ENCODE measurements at regions of chr11 and their contacts with region 1.

Region 1: DNA sequence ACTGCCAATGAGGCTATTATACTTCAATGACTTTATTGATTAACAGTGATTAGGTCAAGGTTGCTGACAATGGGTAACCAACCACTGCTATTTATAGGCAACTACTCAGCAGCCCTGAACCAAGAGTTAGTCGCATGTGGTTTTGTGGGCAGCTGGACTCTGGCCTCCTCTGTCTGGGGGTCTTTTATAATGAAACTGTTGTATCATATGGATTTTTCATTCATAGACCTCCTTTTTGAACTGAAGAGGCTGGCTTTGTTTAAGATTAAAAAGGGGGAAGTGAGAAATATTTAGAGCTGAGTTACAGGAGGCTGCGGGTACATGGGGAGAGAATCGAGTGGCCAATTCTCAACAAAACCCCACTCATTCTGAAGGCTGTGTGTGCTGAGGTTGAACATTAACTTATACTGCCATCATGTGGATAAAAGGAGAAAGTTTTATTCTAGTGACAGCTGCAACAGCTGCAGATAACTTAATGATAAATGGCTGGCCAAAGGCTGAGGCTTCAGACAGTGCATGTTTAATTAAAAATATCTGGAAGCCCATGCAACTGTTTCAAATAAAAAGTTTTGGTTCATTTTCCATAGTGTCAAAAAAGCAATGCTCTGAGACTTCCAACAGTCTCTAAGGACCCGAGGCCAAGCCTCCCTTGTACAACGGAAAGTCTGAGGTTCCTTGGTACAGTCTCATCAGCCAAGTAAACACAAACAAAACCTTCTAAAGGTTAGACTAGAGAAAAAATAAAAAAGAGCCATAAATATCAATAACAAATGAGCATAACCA is 682.6 kb downstream of the KCNA4 start:
- DNase-seq: peak; percentile 48
- H3K4me3 ChIP-seq: no peak overlapping the region
- H3K27ac ChIP-seq: no peak overlapping the region
- H3K4me1 ChIP-seq: peaks cover 16% of the 10 kb centered on the region
- H3K27me3 ChIP-seq: no peaks in the 10 kb centered on the region
- CTCF ChIP-seq: peak; percentile 59 to 64

Region 2: DNA sequence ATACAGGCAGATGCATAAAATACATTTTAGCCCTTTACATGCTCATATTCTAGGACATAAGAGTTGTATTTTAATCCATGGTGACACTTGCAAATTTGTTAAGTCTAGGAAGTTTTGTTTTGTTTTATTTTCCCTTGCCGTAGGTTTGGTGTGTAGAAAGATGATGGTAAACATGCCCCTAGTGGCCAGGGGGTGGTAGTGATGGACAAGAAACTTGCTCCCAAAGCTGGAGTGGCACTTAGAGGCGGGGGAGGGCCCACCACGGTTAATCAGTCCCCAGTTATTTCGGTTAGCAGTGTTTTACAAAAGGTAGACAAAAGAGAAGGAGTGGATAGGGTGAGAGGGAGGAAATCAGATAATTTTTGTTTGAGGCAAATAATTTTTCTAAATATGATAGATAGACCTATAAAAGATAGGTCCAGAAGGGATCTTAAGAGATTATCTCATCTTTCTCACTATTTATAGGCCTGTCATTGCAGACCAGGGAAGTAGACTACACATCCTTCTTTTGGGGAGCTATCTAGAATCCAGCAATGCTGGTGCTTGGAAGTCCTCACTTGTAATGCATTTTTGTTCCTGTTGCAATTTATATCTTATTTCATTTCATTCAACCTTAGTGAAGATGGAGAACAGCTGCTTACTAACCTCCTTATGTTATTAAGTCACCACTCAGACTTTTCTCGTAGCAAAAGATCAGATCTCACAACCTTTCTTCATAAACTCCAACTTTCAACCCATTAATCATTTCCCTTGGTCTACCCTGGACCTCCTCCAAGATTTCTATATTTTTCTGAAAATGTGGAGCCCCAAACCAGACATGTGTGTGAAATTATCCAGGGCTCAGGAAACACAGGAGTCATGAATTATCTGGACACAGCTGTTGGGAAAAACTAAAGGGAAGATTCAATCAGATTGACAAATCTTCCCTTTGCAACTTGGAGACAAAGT is 1628.0 kb before region 1 on chr11:
- CTCF ChIA-PET with region 1: no interaction called
- dilution Hi-C with region 1: no loop called
- in situ Hi-C with region 1: loop called (anchors 10 kb)
- intact Hi-C with region 1: no loop called
- DNase-seq: no peak
- H3K4me3 ChIP-seq: no peak overlapping the region
- H3K27ac ChIP-seq: no peak overlapping the region
- H3K4me1 ChIP-seq: peaks cover under 1% of the 10 kb centered on the region
- H3K27me3 ChIP-seq: peaks cover 3% of the 10 kb centered on the region
- CTCF ChIP-seq: peak; percentile 75 to 76

Region 3: DNA sequence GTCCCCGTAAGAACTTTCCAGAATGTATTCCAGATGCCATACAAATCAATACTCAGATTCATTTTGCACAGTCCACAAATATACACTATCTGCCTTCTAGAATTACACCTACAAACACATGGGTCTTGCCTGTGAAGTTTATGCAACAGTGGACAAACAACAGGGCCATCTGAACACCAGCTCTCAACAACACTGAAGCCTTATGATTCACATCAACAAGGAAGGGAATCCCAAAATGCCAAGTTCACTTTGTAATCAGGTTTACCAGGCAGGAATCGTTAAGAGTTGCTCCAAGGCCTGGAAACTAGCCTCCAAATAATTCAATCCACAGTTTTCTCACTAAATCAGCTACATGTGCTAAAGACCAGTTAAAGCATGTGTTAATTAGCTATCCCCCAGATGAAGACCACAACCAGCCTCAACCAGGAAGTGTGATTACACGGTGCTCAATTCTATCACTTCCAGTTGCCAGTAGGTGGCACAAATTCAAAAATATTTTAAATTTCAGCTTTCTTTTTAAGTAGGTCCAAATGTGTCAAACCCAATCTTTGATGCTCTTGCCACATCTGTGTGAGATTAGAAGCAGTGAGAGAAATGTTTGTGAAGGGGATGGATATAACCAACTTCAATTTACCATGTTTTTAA is 1494.8 kb before region 1 on chr11:
- CTCF ChIA-PET with region 1: no interaction called
- dilution Hi-C with region 1: no loop called
- in situ Hi-C with region 1: no loop called
- intact Hi-C with region 1: loop called (anchors 5 kb)
- DNase-seq: no peak
- H3K4me3 ChIP-seq: no peak overlapping the region
- H3K27ac ChIP-seq: no peak overlapping the region
- H3K4me1 ChIP-seq: no peaks in the 10 kb centered on the region
- H3K27me3 ChIP-seq: no peaks in the 10 kb centered on the region
- CTCF ChIP-seq: peak; percentile 49 to 54

Region 4: DNA sequence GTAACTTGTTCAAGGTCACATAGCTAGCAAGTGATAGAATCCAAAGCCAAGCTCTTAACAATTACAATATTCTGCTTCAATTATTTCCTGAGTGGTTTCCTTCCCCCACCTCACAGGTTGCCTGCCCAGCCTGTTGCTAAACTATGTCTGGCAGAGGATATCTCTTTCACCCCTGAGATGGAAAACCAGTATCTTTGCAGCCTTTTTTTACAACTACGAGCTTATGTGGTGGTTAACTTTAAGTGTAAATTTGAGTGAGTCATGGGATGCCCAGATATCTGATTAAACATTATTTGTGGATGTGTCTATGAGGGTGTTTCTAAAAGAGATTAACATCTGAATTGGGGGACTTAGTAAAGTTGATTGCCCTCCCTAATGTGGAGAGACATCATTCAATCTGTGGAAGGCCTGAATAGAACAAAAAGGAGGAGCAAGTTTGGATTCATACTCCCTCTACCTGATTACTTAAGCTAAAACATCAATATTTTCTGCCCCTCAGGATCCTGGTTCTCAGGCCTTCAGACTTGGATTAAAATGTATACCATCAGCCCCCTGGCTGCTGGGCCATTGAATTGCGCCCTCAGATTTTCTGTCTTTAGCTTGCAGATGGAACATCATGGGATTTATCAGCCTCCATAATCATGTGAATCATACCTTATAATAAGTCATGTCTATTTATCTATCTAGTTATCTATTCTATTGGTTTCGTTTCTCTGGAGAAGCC is 314.1 kb before region 1 on chr11:
- CTCF ChIA-PET with region 1: no interaction called
- dilution Hi-C with region 1: no loop called
- in situ Hi-C with region 1: no loop called
- intact Hi-C with region 1: loop called (anchors 10 kb)
- DNase-seq: peak; percentile 21
- H3K4me3 ChIP-seq: no peak overlapping the region
- H3K27ac ChIP-seq: no peak overlapping the region
- H3K4me1 ChIP-seq: peaks cover 35% of the 10 kb centered on the region
- H3K27me3 ChIP-seq: no peaks in the 10 kb centered on the region
- CTCF ChIP-seq: peak; percentile 60 to 67

Region 5: GRCh38 chr11:29173660-29174062 is 160.5 kb before region 1 on chr11:
- CTCF ChIA-PET with region 1: no interaction called
- dilution Hi-C with region 1: no loop called
- in situ Hi-C with region 1: loop called (anchors 10 to 25 kb)
- intact Hi-C with region 1: no loop called
- DNase-seq: peak; percentile 73
- H3K4me3 ChIP-seq: no peak overlapping the region
- H3K27ac ChIP-seq: peak overlapping the region; percentile 26
- H3K4me1 ChIP-seq: peaks cover 11% of the 10 kb centered on the region
- H3K27me3 ChIP-seq: no peaks in the 10 kb centered on the region
- CTCF ChIP-seq: no peak

Region 6: DNA sequence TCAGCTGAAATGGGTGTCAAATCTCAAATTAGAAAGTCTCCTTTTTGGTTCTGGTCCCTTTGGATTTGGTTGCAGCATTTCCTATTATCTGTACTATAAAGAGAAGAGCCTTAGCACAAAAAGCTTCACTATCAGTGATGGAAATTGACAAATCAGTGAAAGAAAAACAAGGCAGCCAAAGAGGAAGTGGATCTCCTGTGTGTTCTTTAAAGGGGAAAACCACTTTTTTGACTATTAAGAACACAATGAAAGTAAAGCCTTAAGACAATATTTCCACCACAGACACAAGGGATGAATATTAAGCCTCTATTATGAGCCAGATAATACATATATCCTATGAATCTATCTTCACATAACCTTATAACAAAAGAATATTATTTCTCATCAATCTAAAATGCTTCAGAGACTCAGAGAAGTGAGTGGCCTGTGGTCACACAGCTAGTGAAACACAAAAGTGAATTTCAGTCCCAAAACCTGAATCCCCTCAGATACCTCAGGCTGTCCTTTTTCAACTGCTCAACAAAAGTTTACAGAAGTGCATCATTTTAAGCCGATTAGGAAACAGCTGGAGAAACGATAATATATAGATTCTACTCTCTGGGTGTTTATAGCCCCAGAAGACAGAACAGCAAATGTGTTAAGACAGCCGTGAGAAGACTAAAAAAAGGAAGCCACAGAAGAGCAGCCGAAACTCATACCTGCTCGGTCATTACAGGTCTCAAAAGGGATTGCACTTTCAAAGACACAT is 872.2 kb after region 1 on chr11:
- CTCF ChIA-PET with region 1: no interaction called
- dilution Hi-C with region 1: no loop called
- in situ Hi-C with region 1: no loop called
- intact Hi-C with region 1: no loop called
- DNase-seq: no peak
- H3K4me3 ChIP-seq: no peak overlapping the region
- H3K27ac ChIP-seq: no peak overlapping the region
- H3K4me1 ChIP-seq: no peaks in the 10 kb centered on the region
- H3K27me3 ChIP-seq: no peaks in the 10 kb centered on the region
- CTCF ChIP-seq: no peak

Measured in mammary epithelial cell (primary cell).